Activated CD4-positive, alpha-beta memory T cell treated with anti-CD3 and anti-CD28 coated beads for 36 hours (primary cell): ENCODE measurements at regions of chr10 and their contacts with region 1.

Region 1: DNA sequence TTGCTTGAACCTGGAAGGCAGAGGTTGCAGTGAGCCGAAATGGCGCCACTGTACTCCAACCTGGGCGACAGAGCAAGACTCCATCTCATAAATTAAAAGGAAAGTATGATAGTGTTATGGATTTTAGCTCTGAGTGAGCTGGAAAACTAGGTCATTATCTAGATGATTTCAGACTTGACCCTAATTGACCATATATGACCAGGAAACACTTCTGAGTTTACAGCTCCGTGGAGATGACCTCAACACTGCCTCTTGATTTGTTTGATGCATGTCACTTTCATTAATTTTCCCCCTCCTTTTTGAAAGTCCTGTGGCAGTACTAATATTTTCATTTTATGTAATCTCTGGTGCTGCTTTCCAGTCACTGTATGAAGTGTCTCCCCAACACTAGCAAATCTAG is 7.8 kb upstream of the SEC61A2 start:
- DNase-seq: no peak
- H3K4me3 Mint-ChIP-seq: peak overlapping the region; percentile 64
- H3K27ac Mint-ChIP-seq: peak overlapping the region; percentile 97
- H3K4me1 Mint-ChIP-seq: peaks cover 33% of the 10 kb centered on the region
- H3K27me3 Mint-ChIP-seq: no peaks in the 10 kb centered on the region

Region 2: DNA sequence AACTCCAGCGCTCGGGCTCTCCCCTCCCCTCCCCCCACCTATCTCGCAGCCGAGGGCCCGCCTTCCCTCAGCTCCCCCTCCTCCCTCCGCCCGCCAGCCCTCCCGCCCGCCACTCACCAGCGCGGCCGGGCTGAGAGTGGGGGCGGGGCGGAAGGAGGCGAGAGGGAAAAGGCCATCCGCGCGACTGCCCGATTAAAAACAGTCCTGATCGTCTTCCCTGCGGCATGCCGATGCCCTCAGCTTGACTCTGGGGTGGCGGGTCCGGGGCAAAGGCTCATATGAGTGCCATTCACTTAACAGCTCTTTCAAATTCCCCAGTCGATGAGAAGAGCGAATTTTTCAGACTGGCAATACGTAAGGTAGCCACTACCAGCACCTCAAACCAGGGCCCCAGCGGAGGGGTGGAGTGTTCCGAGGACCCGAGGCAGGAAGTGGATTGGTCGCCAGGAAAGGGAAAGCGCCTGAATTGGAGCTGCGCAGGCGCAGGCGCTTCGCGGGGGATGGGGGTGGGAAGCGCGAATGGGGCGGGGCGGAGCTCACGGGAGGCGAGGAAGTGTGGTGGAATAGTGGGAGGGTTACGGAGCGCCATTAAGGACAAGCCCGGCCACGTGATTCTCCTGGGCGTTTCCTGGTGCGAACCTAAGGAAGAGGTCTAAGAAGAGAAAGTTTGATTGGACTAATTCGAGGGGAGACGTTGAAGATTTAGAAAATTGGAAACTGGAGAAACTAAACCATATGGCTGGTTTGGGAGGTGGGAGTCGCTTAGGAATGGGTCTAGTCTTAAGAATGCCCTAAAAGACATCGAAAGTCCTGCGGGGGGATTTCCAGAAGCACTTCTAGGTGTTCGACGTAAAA is 78.6 kb before region 1 on chr10 and contains the start of gene UPF2:
- CTCF ChIA-PET with region 1: no interaction called
- POLR2A ChIA-PET with region 1: interaction called, 12 read pairs
- intact Hi-C with region 1: loop called (anchors 1 kb)
- DNase-seq: peak; percentile 99
- H3K4me3 Mint-ChIP-seq: peak within 1 kb of the TSS; percentile 100
- H3K27ac Mint-ChIP-seq: peak within 1 kb of the TSS; percentile 98
- H3K4me1 Mint-ChIP-seq: peaks cover 32% of the 10 kb centered on the region
- H3K27me3 Mint-ChIP-seq: no peaks in the 10 kb centered on the region
- total RNA-seq, gene UPF2: 29.5 to 32.0 TPM

Region 3: GRCh38 chr10:12308057-12308456 is 186.4 kb after region 1 on chr10:
- CTCF ChIA-PET with region 1: no interaction called
- POLR2A ChIA-PET with region 1: no interaction called
- intact Hi-C with region 1: loop called (anchors 1 kb)
- DNase-seq: peak; percentile 30
- H3K4me3 Mint-ChIP-seq: no peak overlapping the region
- H3K27ac Mint-ChIP-seq: no peak overlapping the region
- H3K4me1 Mint-ChIP-seq: peaks cover 10% of the 10 kb centered on the region
- H3K27me3 Mint-ChIP-seq: no peaks in the 10 kb centered on the region